Stomach (tissue), 19 donors: ENCODE measurements at regions of chr14 and their contacts with region 1.

Region 1: GRCh38 chr14:75654127-75654732 is 6.4 kb downstream of the ERG28 start:
- DNase-seq: peak; percentile 88 to 90
- H3K4me3 ChIP-seq: no peak overlapping the region
- H3K27ac ChIP-seq: no peak overlapping the region
- H3K4me1 ChIP-seq: peaks cover 0 to 10% (median 3%) of the 10 kb centered on the region in 4 donors
- H3K27me3 ChIP-seq: no peaks in the 10 kb centered on the region
- CTCF ChIP-seq: peak in 5 of 7 experiments; percentile 87 to 94 (median 93)
- EP300 ChIP-seq: no peak
- POLR2A ChIP-seq: no peak

Region 2: GRCh38 chr14:75577729-75578101 is 76.5 kb before region 1 on chr14:
- intact Hi-C with region 1: loop called (anchors 5 kb)
- DNase-seq: peak; percentile 86 to 91
- H3K4me3 ChIP-seq: peak overlapping the region; percentile 51 to 61 (median 56)
- H3K27ac ChIP-seq: peak overlapping the region; percentile 52 to 82 (median 77)
- H3K4me1 ChIP-seq: peaks cover 13 to 36% (median 31%) of the 10 kb centered on the region in 4 donors
- H3K27me3 ChIP-seq: peaks cover 0 to 12% (median 0%) of the 10 kb centered on the region in 3 donors
- CTCF ChIP-seq: peak in 5 of 7 experiments; percentile 42 to 70 (median 68)
- EP300 ChIP-seq: no peak
- POLR2A ChIP-seq: no peak